HAP-1 (cell line): ENCODE measurements at regions of chr16 and their contacts with region 1.

Region 1: DNA sequence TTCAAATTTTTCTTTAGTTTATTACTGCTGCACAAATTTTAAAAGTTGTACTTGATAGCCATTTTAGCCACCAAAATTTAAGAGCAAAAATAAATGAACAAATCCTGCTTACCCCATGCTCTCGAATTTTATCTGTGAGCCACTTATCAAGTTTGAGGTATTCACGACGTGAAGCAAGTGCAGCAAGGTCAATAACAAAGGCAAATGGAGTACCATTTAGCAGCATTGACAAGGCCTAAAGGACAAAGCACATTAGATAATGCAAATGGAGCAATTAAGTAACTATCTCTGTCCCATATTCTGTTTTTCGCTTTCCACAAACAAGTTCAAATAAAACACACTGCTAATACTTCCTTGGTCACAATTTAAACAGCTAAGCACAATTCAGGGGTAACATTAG is 54.7 kb downstream of the CNOT1 start:
- DNase-seq: no peak
- H3K4me3 ChIP-seq: no peak overlapping the region
- H3K4me1 ChIP-seq: no peaks in the 10 kb centered on the region
- H3K27me3 ChIP-seq: no peaks in the 10 kb centered on the region

Region 2: GRCh38 chr16:58435779-58436178 is 139.1 kb before region 1 on chr16:
- in situ Hi-C with region 1: no loop called
- DNase-seq: no peak
- H3K4me3 ChIP-seq: no peak overlapping the region
- H3K4me1 ChIP-seq: no peaks in the 10 kb centered on the region
- H3K27me3 ChIP-seq: no peaks in the 10 kb centered on the region

Region 3: GRCh38 chr16:58533751-58534470 is 41.0 kb before region 1 on chr16:
- in situ Hi-C with region 1: loop called (anchors 5 kb)
- DNase-seq: no peak
- H3K4me3 ChIP-seq: no peak overlapping the region
- H3K4me1 ChIP-seq: no peaks in the 10 kb centered on the region
- H3K27me3 ChIP-seq: no peaks in the 10 kb centered on the region